ENCODE measurements at regions of chr6 and their contacts with region 1.

Region 1: DNA sequence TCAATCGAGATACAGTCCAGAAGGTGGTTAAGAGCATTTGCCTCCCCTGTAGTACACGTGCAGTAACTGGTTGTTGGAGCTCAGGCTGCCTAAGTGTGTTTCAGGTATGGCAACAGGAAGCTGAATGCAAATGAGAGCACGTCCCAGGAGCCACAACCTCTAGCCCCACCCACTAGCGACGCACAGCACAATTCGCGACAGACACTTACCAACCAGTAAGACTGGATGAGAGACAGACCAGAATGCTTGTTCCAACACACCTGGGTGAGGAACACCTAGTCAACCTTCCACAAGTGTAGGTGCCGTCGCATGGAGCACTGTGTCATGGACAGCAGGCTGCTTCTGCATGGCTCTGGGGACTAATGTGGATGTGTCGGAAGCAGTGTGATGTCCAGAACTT is 7.2 kb upstream of the SERPINB1 start:
- DNase-seq: peak; percentile 89
- H3K4me3 Mint-ChIP-seq: peak overlapping the region; percentile 63
- H3K27ac Mint-ChIP-seq: peak overlapping the region; percentile 84
- H3K4me1 Mint-ChIP-seq: peaks cover 51% of the 10 kb centered on the region
- H3K27me3 Mint-ChIP-seq: no peaks in the 10 kb centered on the region

Region 2: GRCh38 chr6:2770171-2770570 is 78.7 kb before region 1 on chr6:
- CTCF ChIA-PET with region 1: no interaction called
- intact Hi-C with region 1: no loop called
- DNase-seq: no peak
- H3K4me3 Mint-ChIP-seq: no peak overlapping the region
- H3K27ac Mint-ChIP-seq: no peak overlapping the region
- H3K4me1 Mint-ChIP-seq: peaks cover 48% of the 10 kb centered on the region
- H3K27me3 Mint-ChIP-seq: no peaks in the 10 kb centered on the region

Region 3: GRCh38 chr6:2791124-2791974 is 57.5 kb before region 1 on chr6:
- CTCF ChIA-PET with region 1: interaction called, 28 read pairs
- intact Hi-C with region 1: loop called (anchors 1 kb)
- DNase-seq: peak; percentile 87
- H3K4me3 Mint-ChIP-seq: no peak overlapping the region
- H3K27ac Mint-ChIP-seq: no peak overlapping the region
- H3K4me1 Mint-ChIP-seq: peaks cover 39% of the 10 kb centered on the region
- H3K27me3 Mint-ChIP-seq: no peaks in the 10 kb centered on the region

Region 4: DNA sequence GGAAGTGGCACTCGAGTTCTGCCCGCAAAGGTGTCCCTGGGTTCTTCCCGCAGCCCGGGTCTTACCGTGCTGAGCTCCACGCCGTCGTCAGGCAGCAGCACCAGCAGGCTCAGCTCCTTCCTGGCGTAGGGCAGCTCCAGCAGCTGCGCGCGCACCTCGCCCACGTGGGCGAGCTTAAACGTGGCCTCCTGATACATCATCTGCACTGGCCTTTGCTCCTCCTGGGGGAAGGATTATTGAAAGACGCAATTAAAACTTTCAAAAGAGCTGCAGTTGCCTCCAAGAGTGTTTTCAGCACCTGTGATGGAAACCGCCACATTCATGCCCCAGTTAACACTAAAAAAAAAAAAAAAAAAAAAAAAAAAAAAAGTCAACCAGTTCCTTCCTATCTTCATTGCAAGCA is 42.9 kb after region 1 on chr6:
- CTCF ChIA-PET with region 1: interaction called, 4 read pairs
- intact Hi-C with region 1: loop called (anchors 2 kb)
- DNase-seq: peak; percentile 85
- H3K4me3 Mint-ChIP-seq: peak overlapping the region; percentile 75
- H3K27ac Mint-ChIP-seq: peak overlapping the region; percentile 88
- H3K4me1 Mint-ChIP-seq: peaks cover 71% of the 10 kb centered on the region
- H3K27me3 Mint-ChIP-seq: no peaks in the 10 kb centered on the region

Region 5: DNA sequence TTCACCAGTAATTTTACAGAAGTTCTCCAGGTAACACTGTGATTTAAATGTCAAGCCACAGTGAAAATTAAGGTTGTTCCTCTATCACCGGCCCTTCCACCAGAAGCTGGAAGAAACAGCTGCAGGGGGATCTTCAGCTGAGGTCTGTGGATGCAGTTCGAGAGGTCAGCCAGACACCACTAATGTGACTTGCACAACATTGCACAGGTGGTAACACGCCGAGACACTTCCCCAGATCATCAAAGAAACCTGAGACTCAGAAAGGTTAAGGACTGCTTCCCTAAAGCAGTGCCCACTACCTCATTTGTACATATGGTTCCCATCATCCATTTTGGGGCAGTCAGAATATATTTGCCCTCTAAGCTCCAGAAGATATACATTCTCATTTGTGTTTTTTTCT is 62.3 kb after region 1 on chr6:
- CTCF ChIA-PET with region 1: interaction called, 63 read pairs
- intact Hi-C with region 1: loop called (anchors 1 kb)
- DNase-seq: no peak
- H3K4me3 Mint-ChIP-seq: no peak overlapping the region
- H3K27ac Mint-ChIP-seq: no peak overlapping the region
- H3K4me1 Mint-ChIP-seq: peaks cover 43% of the 10 kb centered on the region
- H3K27me3 Mint-ChIP-seq: no peaks in the 10 kb centered on the region

Region 6: GRCh38 chr6:2931970-2932748 is 83.3 kb after region 1 on chr6:
- CTCF ChIA-PET with region 1: interaction called, 177 read pairs
- intact Hi-C with region 1: loop called (anchors 1 kb)
- DNase-seq: peak; percentile 96
- H3K4me3 Mint-ChIP-seq: peak overlapping the region; percentile 47
- H3K27ac Mint-ChIP-seq: peak overlapping the region; percentile 52
- H3K4me1 Mint-ChIP-seq: peaks cover 22% of the 10 kb centered on the region
- H3K27me3 Mint-ChIP-seq: no peaks in the 10 kb centered on the region

Region 7: DNA sequence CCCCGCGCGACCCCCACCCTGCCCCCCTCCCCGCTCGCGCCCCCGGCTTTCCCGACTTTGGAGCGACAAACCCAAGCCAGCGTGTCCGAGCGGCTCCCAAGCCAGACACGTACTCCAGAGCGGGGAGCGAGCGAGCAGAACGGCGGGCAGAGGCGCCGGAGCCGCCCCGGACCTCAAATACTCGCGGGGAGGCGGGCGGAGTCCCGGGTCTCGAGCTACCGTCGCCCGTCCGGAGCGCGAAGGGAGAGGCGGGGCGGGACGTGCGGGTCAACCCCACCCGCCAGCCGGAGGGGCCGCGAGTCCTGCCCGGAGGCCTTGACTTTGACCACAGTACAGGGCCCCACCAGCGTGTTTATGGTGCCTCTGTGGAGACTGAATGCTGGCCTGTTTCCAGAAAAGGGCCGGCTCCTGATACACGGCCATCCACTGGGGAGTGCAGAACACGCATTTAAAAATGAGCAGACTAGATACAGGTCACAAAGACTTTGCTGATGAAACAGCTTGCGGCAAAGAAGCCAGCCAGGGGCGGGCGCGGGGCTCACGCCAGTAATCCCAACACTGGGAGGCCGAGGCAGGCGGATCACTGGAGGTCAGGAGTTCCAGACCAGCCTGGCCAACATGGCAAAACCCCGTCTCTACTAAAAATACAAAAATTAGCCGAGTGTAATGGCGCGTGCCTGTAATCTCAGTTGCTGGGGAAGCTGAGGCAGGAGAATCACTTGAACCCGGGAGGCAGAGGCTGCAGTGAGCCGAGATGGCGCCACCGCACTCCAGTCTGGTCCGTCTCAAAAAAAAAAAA is 122.8 kb after region 1 on chr6 and contains the start of gene SERPINB6:
- CTCF ChIA-PET with region 1: no interaction called
- intact Hi-C with region 1: no loop called
- DNase-seq: peak; percentile 39
- H3K4me3 Mint-ChIP-seq: peak within 1 kb of the TSS; percentile 82
- H3K27ac Mint-ChIP-seq: peak within 1 kb of the TSS; percentile 84
- H3K4me1 Mint-ChIP-seq: peaks cover 36% of the 10 kb centered on the region
- H3K27me3 Mint-ChIP-seq: peaks cover 4% of the 10 kb centered on the region
- total RNA-seq, gene SERPINB6: 31.2 to 31.4 TPM

Region 8: GRCh38 chr6:2988426-2989331 is 139.8 kb after region 1 on chr6:
- CTCF ChIA-PET with region 1: interaction called, 17 read pairs
- intact Hi-C with region 1: loop called (anchors 1 kb)
- DNase-seq: peak; percentile 84
- H3K4me3 Mint-ChIP-seq: peak overlapping the region; percentile 87
- H3K27ac Mint-ChIP-seq: peak overlapping the region; percentile 97
- H3K4me1 Mint-ChIP-seq: peaks cover 12% of the 10 kb centered on the region
- H3K27me3 Mint-ChIP-seq: no peaks in the 10 kb centered on the region

Region 9: GRCh38 chr6:3068329-3069214 is 219.7 kb after region 1 on chr6 and contains the start of gene RIPK1:
- CTCF ChIA-PET with region 1: no interaction called
- intact Hi-C with region 1: loop called (anchors 2 kb)
- DNase-seq: peak; percentile 95
- H3K4me3 Mint-ChIP-seq: peak within 1 kb of the TSS; percentile 92
- H3K27ac Mint-ChIP-seq: peak within 1 kb of the TSS; percentile 97
- H3K4me1 Mint-ChIP-seq: peaks cover 49% of the 10 kb centered on the region
- H3K27me3 Mint-ChIP-seq: no peaks in the 10 kb centered on the region
- total RNA-seq, gene RIPK1: 8.8 to 10.1 TPM

Measured in activated naive CD4-positive, alpha-beta T cell treated with anti-CD3 and anti-CD28 coated beads for 36 hours (primary cell).